SK-N-SH (cell line): ENCODE measurements at regions of chr9 and their contacts with region 1.

Region 1: DNA sequence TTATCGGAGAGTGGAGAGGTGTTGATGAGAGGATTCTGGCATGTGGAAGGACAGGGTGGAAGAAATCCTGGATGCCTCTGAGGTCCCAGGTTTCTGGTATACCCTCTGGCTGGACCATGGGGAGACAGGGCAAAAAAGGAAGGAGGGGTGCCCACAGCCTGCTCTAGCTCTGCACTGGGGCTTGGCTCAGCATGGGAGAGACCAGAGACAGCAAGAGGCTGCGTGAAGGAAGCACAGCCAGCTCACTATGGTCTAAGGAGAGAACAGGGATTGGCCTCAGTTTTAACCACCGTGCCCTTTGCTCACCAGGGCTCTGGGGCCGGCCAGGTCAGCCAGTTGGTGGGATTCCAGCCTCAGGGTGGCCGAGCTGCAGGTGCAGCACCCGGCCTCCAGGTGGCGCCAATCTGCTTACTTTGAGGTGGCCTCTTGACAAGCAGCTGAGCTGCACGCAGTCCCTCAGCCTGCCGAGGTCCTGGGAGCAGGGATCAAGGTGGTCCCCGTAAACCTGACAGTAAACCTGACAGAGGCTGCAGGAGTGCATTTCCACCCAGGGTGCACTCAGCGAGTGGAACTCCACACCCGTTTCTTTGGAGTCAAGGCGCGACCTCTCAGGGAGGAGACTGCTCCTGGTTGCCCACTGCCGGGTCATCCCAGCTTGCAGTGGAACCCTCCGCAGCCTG is 25.0 kb upstream of the SPTLC1 start:
- DNase-seq: peak; percentile 86
- H3K4me3 ChIP-seq: peak overlapping the region in 1 of 2 experiments; percentile 43; a peak in 1 of 4 replicates
- H3K27ac ChIP-seq: no peak overlapping the region
- H3K4me1 ChIP-seq: peaks cover 4 to 14% of the 10 kb centered on the region in 2 experiments; a peak in 2 of 4 replicates
- H3K27me3 ChIP-seq: no peaks in the 10 kb centered on the region
- CTCF ChIP-seq: peak; percentile 76
- EP300 ChIP-seq: no peak
- RAD21 ChIP-seq: peak; percentile 88

Region 2: GRCh38 chr9:92176068-92176799 is 36.0 kb after region 1 on chr9:
- CTCF ChIA-PET with region 1: interaction called, 12 read pairs
- POLR2A ChIA-PET with region 1: no interaction called
- DNase-seq: no peak
- H3K4me3 ChIP-seq: no peak overlapping the region
- H3K27ac ChIP-seq: no peak overlapping the region
- H3K4me1 ChIP-seq: no peaks in the 10 kb centered on the region; a peak in 1 of 4 replicates
- H3K27me3 ChIP-seq: no peaks in the 10 kb centered on the region
- CTCF ChIP-seq: no peak
- EP300 ChIP-seq: no peak
- RAD21 ChIP-seq: no peak

Region 3: GRCh38 chr9:92223758-92224157 is 83.5 kb after region 1 on chr9:
- CTCF ChIA-PET with region 1: interaction called, 19 read pairs
- POLR2A ChIA-PET with region 1: no interaction called
- DNase-seq: peak; percentile 86
- H3K4me3 ChIP-seq: no peak overlapping the region
- H3K27ac ChIP-seq: peak overlapping the region in 1 of 2 experiments; percentile 95; a peak in 2 of 4 replicates
- H3K4me1 ChIP-seq: peaks cover 0 to 24% of the 10 kb centered on the region in 2 experiments; a peak in 2 of 4 replicates
- H3K27me3 ChIP-seq: no peaks in the 10 kb centered on the region
- CTCF ChIP-seq: no peak
- EP300 ChIP-seq: peak in 1 of 2 experiments; percentile 94; a peak in 2 of 4 replicates
- RAD21 ChIP-seq: 0 out of 2 replicates have a peak, but pooled peaks have one; percentile 25

Region 4: DNA sequence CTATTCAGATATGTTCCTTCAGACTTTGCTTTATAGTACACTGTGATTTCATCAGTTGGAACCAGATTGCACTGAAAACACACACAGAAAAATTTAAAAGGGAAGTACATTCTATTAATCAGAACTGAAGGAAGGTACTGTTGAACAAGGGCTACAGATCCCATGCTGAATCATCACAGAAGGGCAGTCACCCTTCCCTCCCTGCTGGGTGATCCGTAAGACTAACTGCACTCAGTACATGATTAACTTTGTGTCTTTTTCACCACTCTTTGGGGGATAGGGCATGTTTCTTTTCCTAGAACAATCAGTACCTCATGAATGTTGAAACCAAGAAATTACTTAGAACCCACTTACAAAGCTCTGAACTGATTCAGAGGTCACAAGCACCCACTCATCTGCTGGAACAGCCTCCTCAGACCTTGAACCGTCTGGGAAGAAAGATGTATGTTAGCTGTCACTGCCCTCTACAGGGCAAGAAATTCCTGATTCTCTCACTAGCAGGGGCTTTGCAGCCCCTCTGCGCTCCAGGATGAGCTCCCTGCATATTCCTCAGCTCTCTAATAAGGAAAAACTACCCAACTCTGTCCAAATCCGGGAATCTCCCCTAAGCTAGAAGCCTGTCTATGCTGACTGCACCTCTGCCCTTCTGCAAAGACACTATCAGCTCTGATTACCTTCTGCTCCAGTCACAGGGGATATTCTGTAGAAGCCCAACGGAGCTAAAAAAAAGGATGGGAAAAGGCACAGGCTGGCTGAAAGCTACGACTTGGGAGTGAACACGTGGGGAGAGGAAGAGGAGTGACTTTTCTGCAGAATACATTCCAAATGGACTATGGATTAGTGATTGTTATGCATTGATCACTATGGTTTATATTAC is 102.3 kb after region 1 on chr9:
- CTCF ChIA-PET with region 1: interaction called, 94 read pairs
- POLR2A ChIA-PET with region 1: interaction called, 3 read pairs
- DNase-seq: peak; percentile 44
- H3K4me3 ChIP-seq: no peak overlapping the region
- H3K27ac ChIP-seq: no peak overlapping the region
- H3K4me1 ChIP-seq: peaks cover 0 to 7% of the 10 kb centered on the region in 2 experiments; a peak in 1 of 4 replicates
- H3K27me3 ChIP-seq: no peaks in the 10 kb centered on the region
- CTCF ChIP-seq: peak; percentile 54
- EP300 ChIP-seq: no peak
- RAD21 ChIP-seq: peak; percentile 59

Region 5: GRCh38 chr9:92265159-92265558 is 124.9 kb after region 1 on chr9:
- CTCF ChIA-PET with region 1: interaction called, 65 read pairs
- POLR2A ChIA-PET with region 1: no interaction called
- DNase-seq: no peak
- H3K4me3 ChIP-seq: no peak overlapping the region
- H3K27ac ChIP-seq: no peak overlapping the region
- H3K4me1 ChIP-seq: no peaks in the 10 kb centered on the region
- H3K27me3 ChIP-seq: no peaks in the 10 kb centered on the region
- CTCF ChIP-seq: no peak
- EP300 ChIP-seq: no peak
- RAD21 ChIP-seq: no peak

Region 6: DNA sequence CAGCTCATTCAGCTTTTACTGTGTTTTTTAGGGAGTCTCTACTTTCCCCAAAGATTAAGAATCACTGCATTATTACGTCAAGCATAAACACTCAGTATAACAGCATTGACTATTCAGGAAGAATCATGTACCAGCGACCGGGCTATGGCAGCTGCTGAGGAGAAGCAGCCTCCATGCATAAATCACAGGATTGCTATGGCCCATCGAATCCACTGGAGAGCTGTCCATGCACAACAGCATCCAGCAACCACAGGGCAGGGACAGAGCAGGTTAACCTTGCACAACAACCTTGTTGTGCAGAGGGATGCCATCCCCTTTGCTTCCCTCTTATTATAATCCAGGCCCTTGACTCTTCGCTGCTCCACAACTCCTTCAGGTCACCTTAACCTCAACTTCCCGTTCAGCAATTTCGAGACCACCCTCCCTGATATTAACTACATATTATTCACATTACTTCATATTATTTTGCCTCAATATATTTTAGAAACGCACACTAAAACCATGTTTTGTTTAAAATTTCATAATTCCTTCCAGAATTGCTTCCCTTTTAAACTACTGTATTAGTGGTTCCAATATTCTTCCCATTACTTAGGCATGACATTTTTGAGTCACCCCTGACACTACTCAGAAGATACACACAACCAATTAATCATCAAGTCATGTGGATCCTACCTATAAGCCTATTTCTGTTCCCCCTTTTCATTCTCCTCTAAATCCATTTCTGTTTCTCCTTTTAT is 152.3 kb after region 1 on chr9:
- CTCF ChIA-PET with region 1: interaction called, 32 read pairs
- POLR2A ChIA-PET with region 1: no interaction called
- DNase-seq: peak; percentile 2
- H3K4me3 ChIP-seq: peak overlapping the region; percentile 81 to 87
- H3K27ac ChIP-seq: peak overlapping the region; percentile 77 to 80; a peak in 3 of 4 replicates
- H3K4me1 ChIP-seq: peaks cover 5 to 15% of the 10 kb centered on the region in 2 experiments; a peak in 3 of 4 replicates
- H3K27me3 ChIP-seq: no peaks in the 10 kb centered on the region
- CTCF ChIP-seq: no peak
- EP300 ChIP-seq: no peak
- RAD21 ChIP-seq: no peak

Region 7: DNA sequence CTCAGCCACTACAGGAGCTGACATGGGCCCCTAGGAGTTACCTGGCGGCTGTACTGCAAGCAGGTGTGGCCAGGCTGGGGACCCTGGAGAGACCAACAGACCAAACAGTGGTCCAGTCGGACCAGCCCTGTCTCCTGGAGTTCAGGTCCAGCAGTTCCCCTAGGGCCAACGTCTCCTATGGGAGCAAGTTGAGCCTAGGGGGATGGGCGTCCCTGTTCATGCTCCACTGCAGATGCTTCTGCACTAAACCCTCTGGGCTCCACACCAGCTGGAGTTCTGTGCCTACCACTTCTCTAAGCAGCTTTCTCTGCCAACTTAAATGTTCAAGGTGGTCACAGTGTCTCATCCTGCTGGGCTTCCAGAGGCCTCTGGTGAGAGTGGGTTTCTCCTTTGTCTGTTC is 304.6 kb after region 1 on chr9:
- CTCF ChIA-PET with region 1: interaction called, 14 read pairs
- POLR2A ChIA-PET with region 1: no interaction called
- DNase-seq: no peak
- H3K4me3 ChIP-seq: no peak overlapping the region
- H3K27ac ChIP-seq: no peak overlapping the region
- H3K4me1 ChIP-seq: no peaks in the 10 kb centered on the region
- H3K27me3 ChIP-seq: no peaks in the 10 kb centered on the region
- CTCF ChIP-seq: no peak
- EP300 ChIP-seq: no peak
- RAD21 ChIP-seq: no peak